ENCODE measurements at regions of chr5 and their contacts with region 1.

Region 1: GRCh38 chr5:149960272-149961185 is at the start of gene SLC26A2:
- DNase-seq: peak; percentile 98 to 99
- H3K4me3 ChIP-seq: peak within 1 kb of the TSS; percentile 90
- H3K4me3 Mint-ChIP-seq: peak within 1 kb of the TSS; percentile 90
- H3K27ac Mint-ChIP-seq: peak within 1 kb of the TSS; percentile 96
- H3K4me1 ChIP-seq: peaks cover 25% of the 10 kb centered on the region
- H3K4me1 Mint-ChIP-seq: peaks cover 32% of the 10 kb centered on the region
- H3K27me3 ChIP-seq: no peaks in the 10 kb centered on the region
- H3K27me3 Mint-ChIP-seq: no peaks in the 10 kb centered on the region
- CTCF ChIP-seq: no peak
- total RNA-seq, gene SLC26A2: 43.9 and 49.1 TPM in 2 replicates

Region 2: GRCh38 chr5:149455889-149456409 is 504.6 kb before region 1 on chr5:
- CTCF ChIA-PET with region 1: no interaction called
- POLR2A ChIA-PET with region 1: no interaction called
- intact Hi-C with region 1: no loop called
- DNase-seq: no peak
- H3K4me3 ChIP-seq: no peak overlapping the region
- H3K4me3 Mint-ChIP-seq: no peak overlapping the region
- H3K27ac Mint-ChIP-seq: peak overlapping the region; percentile 4
- H3K4me1 ChIP-seq: peaks cover 54% of the 10 kb centered on the region
- H3K4me1 Mint-ChIP-seq: peaks cover 43% of the 10 kb centered on the region
- H3K27me3 ChIP-seq: no peaks in the 10 kb centered on the region
- H3K27me3 Mint-ChIP-seq: no peaks in the 10 kb centered on the region
- CTCF ChIP-seq: no peak

Region 3: DNA sequence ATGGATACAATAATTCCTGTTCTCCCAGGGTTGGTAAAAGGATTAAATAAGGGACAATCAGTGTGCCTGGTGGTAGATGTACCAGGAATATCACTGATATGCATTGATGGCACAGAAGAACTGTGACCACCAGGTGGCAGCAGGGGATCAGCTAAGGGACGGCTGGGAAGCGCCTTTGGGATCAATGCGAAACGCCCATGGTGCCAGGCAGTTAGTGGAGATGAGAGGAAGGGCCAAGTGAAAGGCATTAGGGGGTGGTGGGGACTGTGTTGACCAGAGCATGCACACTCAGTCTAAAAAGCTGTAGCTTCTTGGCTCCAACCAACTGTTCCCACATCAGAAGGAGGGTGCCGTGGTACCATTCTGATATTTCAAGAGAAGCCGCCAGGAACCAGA is 323.7 kb before region 1 on chr5:
- CTCF ChIA-PET with region 1: no interaction called
- POLR2A ChIA-PET with region 1: no interaction called
- intact Hi-C with region 1: loop called (anchors 10 kb)
- DNase-seq: peak; percentile 89 to 91
- H3K4me3 ChIP-seq: no peak overlapping the region
- H3K4me3 Mint-ChIP-seq: no peak overlapping the region
- H3K27ac Mint-ChIP-seq: no peak overlapping the region
- H3K4me1 ChIP-seq: peaks cover 10% of the 10 kb centered on the region; the same call in 1 of the 2 replicates
- H3K4me1 Mint-ChIP-seq: no peaks in the 10 kb centered on the region
- H3K27me3 ChIP-seq: no peaks in the 10 kb centered on the region
- H3K27me3 Mint-ChIP-seq: no peaks in the 10 kb centered on the region
- CTCF ChIP-seq: peak; percentile 90 to 95

Region 4: DNA sequence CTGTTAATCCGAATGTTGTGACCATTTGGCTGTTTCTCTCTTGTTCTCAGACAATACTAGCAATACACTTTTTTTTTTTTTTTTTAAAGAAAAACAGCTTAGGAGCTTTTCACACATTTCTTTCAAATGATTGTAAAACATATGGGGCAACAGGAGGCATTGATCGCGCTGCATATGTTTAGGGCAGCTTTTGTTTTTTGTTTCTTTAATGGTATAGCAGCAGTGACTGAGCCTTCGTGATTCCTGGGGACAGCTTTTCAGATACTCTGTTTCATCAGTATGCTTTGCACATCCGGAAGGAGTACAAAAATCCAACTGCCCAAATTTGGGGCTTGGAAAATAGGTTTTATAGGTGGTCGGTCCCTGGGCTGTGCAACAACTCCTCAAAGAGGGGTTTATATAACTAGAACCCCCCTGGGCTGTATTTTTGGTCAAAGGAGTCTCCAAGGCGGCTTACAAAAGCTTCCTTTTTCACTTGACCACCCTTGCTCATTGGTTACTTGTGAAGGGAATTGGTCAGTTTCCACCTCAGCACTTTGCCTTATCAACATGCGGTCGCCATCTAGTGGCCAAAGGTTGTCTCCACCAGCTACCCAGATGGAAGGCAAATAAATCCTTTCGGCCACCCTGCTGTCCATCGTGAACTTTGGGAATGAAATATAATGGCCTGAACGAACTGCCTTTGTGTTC is 107.7 kb before region 1 on chr5:
- CTCF ChIA-PET with region 1: interaction called, 31 read pairs
- POLR2A ChIA-PET with region 1: interaction called, 3 read pairs
- intact Hi-C with region 1: loop called (anchors 1 kb)
- DNase-seq: peak; percentile 79 to 81
- H3K4me3 ChIP-seq: no peak overlapping the region
- H3K4me3 Mint-ChIP-seq: no peak overlapping the region
- H3K27ac Mint-ChIP-seq: no peak overlapping the region
- H3K4me1 ChIP-seq: no peaks in the 10 kb centered on the region
- H3K4me1 Mint-ChIP-seq: no peaks in the 10 kb centered on the region
- H3K27me3 ChIP-seq: no peaks in the 10 kb centered on the region
- H3K27me3 Mint-ChIP-seq: no peaks in the 10 kb centered on the region
- CTCF ChIP-seq: peak; percentile 83 to 86

Region 5: DNA sequence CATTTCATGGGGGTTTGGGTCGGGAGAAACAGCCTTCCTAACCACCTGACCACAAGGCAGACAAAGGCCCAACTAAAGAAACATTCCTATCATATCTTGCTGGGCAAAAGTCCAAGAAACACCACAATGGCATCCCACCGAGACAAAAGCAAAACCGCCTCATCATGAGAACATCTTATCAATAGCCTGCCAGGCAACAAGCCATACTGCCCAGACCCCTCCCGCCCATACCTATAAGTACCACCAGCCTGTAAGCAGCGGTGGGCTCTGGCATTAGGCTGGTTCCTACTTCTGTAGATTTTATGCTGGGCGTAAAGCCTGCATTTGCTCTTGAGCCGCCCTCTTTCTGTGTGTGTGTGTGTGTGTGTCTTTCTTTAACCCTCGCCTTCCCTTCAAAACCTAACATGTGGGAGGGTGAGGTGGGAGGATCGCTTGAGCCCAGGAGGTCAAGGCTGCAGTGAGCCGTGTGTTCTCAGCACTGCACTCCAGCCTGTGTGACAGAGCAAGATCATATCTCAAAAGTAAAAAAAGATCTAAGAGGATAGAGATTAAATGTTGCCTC is 72.8 kb before region 1 on chr5:
- CTCF ChIA-PET with region 1: no interaction called
- POLR2A ChIA-PET with region 1: interaction called, 6 read pairs
- intact Hi-C with region 1: loop called (anchors 1 kb)
- DNase-seq: peak; percentile 84 to 88
- H3K4me3 ChIP-seq: peak overlapping the region; percentile 5; the same call in 1 of the 2 replicates
- H3K4me3 Mint-ChIP-seq: peak overlapping the region; percentile 64
- H3K27ac Mint-ChIP-seq: peak overlapping the region; percentile 90
- H3K4me1 ChIP-seq: peaks cover 25% of the 10 kb centered on the region
- H3K4me1 Mint-ChIP-seq: peaks cover 21% of the 10 kb centered on the region
- H3K27me3 ChIP-seq: no peaks in the 10 kb centered on the region
- H3K27me3 Mint-ChIP-seq: no peaks in the 10 kb centered on the region
- CTCF ChIP-seq: no peak

Region 6: DNA sequence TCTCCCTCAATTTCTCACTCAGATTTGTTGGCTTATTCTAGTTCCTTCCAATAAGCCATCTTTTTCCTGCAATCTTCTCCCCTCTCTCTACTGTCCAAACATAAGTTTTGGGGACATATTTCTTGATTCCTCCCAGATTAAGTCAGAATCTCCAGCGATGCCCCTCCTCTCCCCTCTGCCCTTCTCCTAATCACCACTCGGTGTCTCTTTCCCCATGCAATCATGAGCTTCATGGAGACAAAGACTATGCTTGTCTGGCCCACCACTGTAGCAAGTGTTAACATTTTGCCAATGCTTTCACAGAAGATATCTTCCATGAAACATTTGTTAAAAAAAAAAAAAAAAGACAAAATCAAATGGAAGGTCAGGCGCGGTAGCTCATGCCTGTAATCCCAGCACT is 58.4 kb before region 1 on chr5:
- CTCF ChIA-PET with region 1: interaction called, 37 read pairs
- POLR2A ChIA-PET with region 1: interaction called, 7 read pairs
- intact Hi-C with region 1: loop called (anchors 1 kb)
- DNase-seq: peak; percentile 43 to 48
- H3K4me3 ChIP-seq: no peak overlapping the region
- H3K4me3 Mint-ChIP-seq: no peak overlapping the region
- H3K27ac Mint-ChIP-seq: peak overlapping the region; percentile 36
- H3K4me1 ChIP-seq: peaks cover 11% of the 10 kb centered on the region
- H3K4me1 Mint-ChIP-seq: peaks cover 20% of the 10 kb centered on the region
- H3K27me3 ChIP-seq: no peaks in the 10 kb centered on the region
- H3K27me3 Mint-ChIP-seq: no peaks in the 10 kb centered on the region
- CTCF ChIP-seq: peak; percentile 46 to 62

Region 7: GRCh38 chr5:149942199-149942598 is 18.3 kb before region 1 on chr5:
- CTCF ChIA-PET with region 1: interaction called, 9 read pairs
- POLR2A ChIA-PET with region 1: interaction called, 6 read pairs
- intact Hi-C with region 1: loop called (anchors 1 kb)
- DNase-seq: no peak
- H3K4me3 ChIP-seq: no peak overlapping the region
- H3K4me3 Mint-ChIP-seq: peak overlapping the region; percentile 53
- H3K27ac Mint-ChIP-seq: peak overlapping the region; percentile 87
- H3K4me1 ChIP-seq: peaks cover 84% of the 10 kb centered on the region
- H3K4me1 Mint-ChIP-seq: peaks cover 66% of the 10 kb centered on the region
- H3K27me3 ChIP-seq: no peaks in the 10 kb centered on the region
- H3K27me3 Mint-ChIP-seq: no peaks in the 10 kb centered on the region
- CTCF ChIP-seq: peak in 1 of 2 experiments; percentile 19

Region 8: DNA sequence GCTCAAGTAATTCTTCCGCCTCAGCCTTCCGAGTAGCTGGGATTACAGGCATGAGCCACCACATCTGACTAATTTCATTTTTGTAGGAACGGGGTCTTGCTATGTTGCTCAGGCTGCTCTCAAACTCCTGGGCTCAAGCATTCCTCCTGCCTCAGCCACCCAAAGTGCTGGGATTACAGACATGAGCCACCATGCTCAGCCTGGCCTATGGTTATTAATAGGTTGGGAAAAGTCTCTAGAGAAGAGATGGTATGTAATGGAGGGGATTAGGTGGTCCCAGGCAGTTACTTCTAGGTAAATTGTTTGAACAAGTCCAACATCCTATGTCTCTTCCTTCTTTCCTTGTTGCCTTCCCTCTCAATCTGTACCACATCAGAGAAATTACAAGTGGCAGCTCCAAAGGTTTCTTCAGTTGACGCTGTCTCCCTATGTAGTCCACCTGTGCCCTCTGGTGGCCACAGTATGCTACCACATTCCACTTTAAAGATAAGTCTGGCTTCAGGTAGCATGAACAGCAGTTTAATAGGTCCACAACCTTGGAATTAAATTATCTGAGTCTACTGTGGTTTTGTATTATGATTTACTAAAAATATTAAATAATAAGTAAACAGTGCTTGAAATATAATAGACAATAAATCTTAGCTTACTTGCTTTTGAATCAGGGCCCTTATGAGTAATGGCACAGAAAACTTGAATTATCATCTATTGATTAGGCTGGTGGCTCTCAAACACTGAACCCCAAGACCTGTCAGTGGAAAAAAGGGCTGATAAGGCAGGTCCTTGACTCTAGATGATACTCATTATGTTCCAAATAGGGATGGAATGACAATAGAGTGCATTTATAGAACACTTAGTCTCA is 30.2 kb after region 1 on chr5:
- CTCF ChIA-PET with region 1: interaction called, 39 read pairs
- POLR2A ChIA-PET with region 1: interaction called, 3 read pairs
- intact Hi-C with region 1: loop called (anchors 1 kb)
- DNase-seq: peak; percentile 77 to 80
- H3K4me3 ChIP-seq: no peak overlapping the region
- H3K4me3 Mint-ChIP-seq: no peak overlapping the region
- H3K27ac Mint-ChIP-seq: no peak overlapping the region
- H3K4me1 ChIP-seq: peaks cover 22% of the 10 kb centered on the region
- H3K4me1 Mint-ChIP-seq: peaks cover 21% of the 10 kb centered on the region
- H3K27me3 ChIP-seq: no peaks in the 10 kb centered on the region
- H3K27me3 Mint-ChIP-seq: no peaks in the 10 kb centered on the region
- CTCF ChIP-seq: peak; percentile 94 to 95